Activated CD4-positive, alpha-beta memory T cell treated with anti-CD3 and anti-CD28 coated beads for 36 hours (primary cell): ENCODE measurements at regions of chr1 and their contacts with region 1.

Region 1: GRCh38 chr1:161486806-161487741 is 18.2 kb upstream of the FCGR2A start:
- DNase-seq: peak; percentile 26
- H3K4me3 Mint-ChIP-seq: no peak overlapping the region
- H3K27ac Mint-ChIP-seq: no peak overlapping the region
- H3K4me1 Mint-ChIP-seq: peaks cover 13% of the 10 kb centered on the region
- H3K27me3 Mint-ChIP-seq: peaks cover 25% of the 10 kb centered on the region

Region 2: DNA sequence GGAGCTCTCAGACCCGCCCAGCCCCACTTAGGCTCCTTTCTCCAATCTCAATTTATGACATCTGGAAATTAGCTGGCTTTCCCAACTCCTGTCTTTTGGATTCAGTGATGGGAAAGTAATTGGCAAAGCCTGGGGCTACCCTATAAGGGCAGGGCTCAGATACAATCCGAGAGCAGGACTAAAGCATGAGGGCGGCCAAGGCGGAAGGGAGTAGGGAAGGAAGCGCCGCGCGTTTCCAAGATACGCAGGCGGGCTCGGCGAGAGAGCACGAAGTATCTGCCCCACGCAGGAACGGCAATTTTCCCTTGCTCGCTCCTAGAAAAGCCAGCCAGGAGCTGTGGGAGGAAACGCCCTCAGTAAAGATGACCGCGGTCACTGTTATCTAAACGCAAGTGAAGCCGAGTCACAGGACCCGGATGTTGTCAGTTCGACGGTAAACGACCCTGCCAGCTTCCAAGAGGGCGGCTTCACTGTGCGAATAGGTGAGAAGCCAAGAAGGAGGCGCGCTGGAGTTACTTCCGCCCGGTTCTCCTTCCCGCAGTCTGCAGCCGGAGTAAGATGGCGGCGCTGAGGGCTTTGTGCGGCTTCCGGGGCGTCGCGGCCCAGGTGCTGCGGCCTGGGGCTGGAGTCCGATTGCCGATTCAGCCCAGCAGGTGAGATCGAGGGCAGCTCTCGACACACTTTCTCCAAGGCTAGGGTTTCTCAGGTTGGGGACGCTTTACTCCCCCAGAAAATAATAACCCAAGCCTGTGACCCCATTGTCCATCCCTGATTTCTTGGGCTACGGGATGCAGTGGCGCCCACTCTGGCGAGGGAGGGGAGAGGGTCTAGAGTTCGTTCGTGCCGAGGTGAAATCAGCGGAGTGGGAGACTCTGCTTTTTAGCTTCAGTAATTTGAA is 285.0 kb before region 1 on chr1 and contains the start of gene NDUFS2:
- CTCF ChIA-PET with region 1: no interaction called
- POLR2A ChIA-PET with region 1: no interaction called
- intact Hi-C with region 1: no loop called
- DNase-seq: peak; percentile 97
- H3K4me3 Mint-ChIP-seq: peak within 1 kb of the TSS; percentile 88
- H3K27ac Mint-ChIP-seq: peak within 1 kb of the TSS; percentile 87
- H3K4me1 Mint-ChIP-seq: peaks cover 59% of the 10 kb centered on the region
- H3K27me3 Mint-ChIP-seq: no peaks in the 10 kb centered on the region
- total RNA-seq, gene NDUFS2: 98.3 to 103 TPM

Region 3: DNA sequence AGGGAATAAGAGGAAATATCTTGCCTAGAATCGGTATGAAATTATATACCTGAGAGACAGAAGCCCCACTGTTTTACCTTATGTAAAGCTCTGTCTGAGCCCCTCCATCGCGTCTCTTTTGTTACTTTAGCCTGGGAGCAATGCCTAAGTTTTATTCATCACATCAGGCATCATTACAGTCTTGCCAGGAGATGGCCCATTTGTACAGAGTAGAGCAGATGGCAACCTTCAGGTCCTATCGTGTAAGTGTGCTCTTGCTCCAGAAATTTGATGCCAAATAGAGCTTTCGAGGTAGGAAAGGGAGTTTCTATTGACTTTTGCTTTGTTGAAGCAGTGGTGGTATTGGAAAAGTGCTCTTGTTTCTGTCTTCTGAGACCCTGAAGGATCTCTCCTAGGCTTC is 144.3 kb before region 1 on chr1:
- CTCF ChIA-PET with region 1: no interaction called
- POLR2A ChIA-PET with region 1: no interaction called
- intact Hi-C with region 1: no loop called
- DNase-seq: no peak
- H3K4me3 Mint-ChIP-seq: no peak overlapping the region
- H3K27ac Mint-ChIP-seq: no peak overlapping the region
- H3K4me1 Mint-ChIP-seq: no peaks in the 10 kb centered on the region
- H3K27me3 Mint-ChIP-seq: no peaks in the 10 kb centered on the region

Region 4: DNA sequence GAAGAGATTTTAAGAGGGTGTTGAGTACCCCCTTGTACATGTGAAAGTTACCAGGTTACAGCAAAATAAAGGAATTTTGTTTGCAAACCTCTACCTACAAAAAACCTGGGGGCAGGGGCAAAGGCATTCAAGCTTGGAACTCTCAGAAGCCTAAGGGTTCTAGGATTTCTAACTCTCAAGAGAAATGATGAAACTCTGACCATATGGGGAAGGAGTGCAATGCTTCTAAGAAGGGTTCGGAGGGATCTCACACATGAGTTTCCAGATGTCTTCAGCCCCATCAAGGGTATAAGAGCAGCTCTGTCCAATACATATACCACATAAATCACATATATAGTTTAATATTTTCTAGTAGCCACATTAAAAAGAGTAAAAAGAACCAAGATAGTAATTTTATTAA is 10.9 kb after region 1 on chr1:
- CTCF ChIA-PET with region 1: interaction called, 12 read pairs
- POLR2A ChIA-PET with region 1: no interaction called
- intact Hi-C with region 1: no loop called
- DNase-seq: no peak
- H3K4me3 Mint-ChIP-seq: no peak overlapping the region
- H3K27ac Mint-ChIP-seq: no peak overlapping the region
- H3K4me1 Mint-ChIP-seq: peaks cover 7% of the 10 kb centered on the region
- H3K27me3 Mint-ChIP-seq: peaks cover 7% of the 10 kb centered on the region

Region 5: GRCh38 chr1:161738627-161739287 is 251.7 kb after region 1 on chr1:
- CTCF ChIA-PET with region 1: interaction called, 79 read pairs
- POLR2A ChIA-PET with region 1: no interaction called
- intact Hi-C with region 1: loop called (anchors 1 kb)
- DNase-seq: peak; percentile 75
- H3K4me3 Mint-ChIP-seq: no peak overlapping the region
- H3K27ac Mint-ChIP-seq: peak overlapping the region; percentile 49
- H3K4me1 Mint-ChIP-seq: peaks cover 29% of the 10 kb centered on the region
- H3K27me3 Mint-ChIP-seq: peaks cover 2% of the 10 kb centered on the region